ENCODE measurements at regions of chr1 and their contacts with region 1.

Region 1: DNA sequence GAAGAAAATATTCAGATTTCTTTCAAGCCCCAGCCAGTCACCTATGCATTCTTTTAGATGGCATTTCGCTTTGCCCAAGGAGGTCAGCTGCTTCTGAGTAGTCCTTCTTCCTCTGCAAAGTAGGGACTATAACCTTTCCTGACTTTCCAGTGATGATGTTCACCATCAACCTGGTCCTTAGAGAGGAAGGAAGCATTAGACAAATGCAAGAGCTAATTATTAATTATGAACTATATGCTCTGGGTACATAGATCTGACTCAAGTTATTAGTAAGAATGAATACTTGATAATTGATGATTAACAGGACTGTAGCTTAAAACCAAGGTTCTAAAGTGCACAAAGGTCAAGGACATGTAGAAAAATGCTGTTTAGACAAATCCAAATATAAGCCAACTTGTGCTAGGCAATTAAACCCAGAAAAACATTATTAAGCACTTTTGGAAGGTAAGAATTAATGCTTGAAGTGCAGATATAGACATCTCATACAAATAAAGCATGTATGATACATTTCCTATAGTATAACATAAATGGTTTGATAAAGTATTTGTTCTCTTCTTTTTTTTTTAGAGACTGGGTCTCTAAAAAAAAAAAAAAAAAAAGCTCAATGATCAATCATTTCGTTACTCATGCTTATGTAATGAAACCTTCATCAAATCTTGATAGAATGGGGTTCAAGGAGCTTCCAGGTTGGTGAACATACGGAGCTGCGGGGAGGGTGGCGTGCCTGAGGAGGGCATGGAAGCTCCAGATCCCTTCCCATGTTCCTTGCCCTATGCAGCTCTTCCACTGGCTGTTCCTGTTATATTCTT is 11.2 kb upstream of the AGMAT start:
- DNase-seq: no peak
- ATAC-seq: no peak
- H3K4me3 ChIP-seq: no peak overlapping the region
- H3K27ac ChIP-seq: no peak overlapping the region
- H3K4me1 ChIP-seq: no peaks in the 10 kb centered on the region; the same call in 1 of the 2 replicates
- H3K27me3 ChIP-seq: no peaks in the 10 kb centered on the region
- CTCF ChIP-seq: no peak
- POLR2A ChIP-seq: no peak
- RAD21 ChIP-seq: no peak

Region 2: GRCh38 chr1:14713086-14713485 is 882.9 kb before region 1 on chr1:
- CTCF ChIA-PET with region 1: no interaction called
- POLR2A ChIA-PET with region 1: no interaction called
- dilution Hi-C with region 1: no loop called
- in situ Hi-C with region 1: no loop called
- intact Hi-C with region 1: no loop called
- DNase-seq: no peak
- ATAC-seq: no peak
- H3K4me3 ChIP-seq: no peak overlapping the region
- H3K27ac ChIP-seq: no peak overlapping the region
- H3K4me1 ChIP-seq: no peaks in the 10 kb centered on the region
- H3K27me3 ChIP-seq: peaks cover 2% of the 10 kb centered on the region; the same call in 1 of the 2 replicates
- CTCF ChIP-seq: no peak
- POLR2A ChIP-seq: no peak
- RAD21 ChIP-seq: no peak

Region 3: GRCh38 chr1:15406609-15407559 is 189.1 kb before region 1 on chr1:
- CTCF ChIA-PET with region 1: no interaction called
- POLR2A ChIA-PET with region 1: no interaction called
- dilution Hi-C with region 1: no loop called
- in situ Hi-C with region 1: no loop called
- intact Hi-C with region 1: no loop called
- DNase-seq: peak; percentile 86
- ATAC-seq: peak; percentile 16
- H3K4me3 ChIP-seq: no peak overlapping the region
- H3K27ac ChIP-seq: no peak overlapping the region
- H3K4me1 ChIP-seq: peaks cover 20% of the 10 kb centered on the region
- H3K27me3 ChIP-seq: no peaks in the 10 kb centered on the region
- CTCF ChIP-seq: no peak
- POLR2A ChIP-seq: no peak
- RAD21 ChIP-seq: 0 out of 2 replicates have a peak, but pooled peaks have one; percentile 4

Region 4: GRCh38 chr1:15741183-15741850 is 145.3 kb after region 1 on chr1:
- CTCF ChIA-PET with region 1: interaction called, 5 read pairs
- POLR2A ChIA-PET with region 1: no interaction called
- dilution Hi-C with region 1: no loop called
- in situ Hi-C with region 1: loop called (anchors 5 kb)
- intact Hi-C with region 1: loop called (anchors 1 kb)
- DNase-seq: peak; percentile 44
- ATAC-seq: peak; percentile 87
- H3K4me3 ChIP-seq: no peak overlapping the region
- H3K27ac ChIP-seq: no peak overlapping the region
- H3K4me1 ChIP-seq: no peaks in the 10 kb centered on the region
- H3K27me3 ChIP-seq: no peaks in the 10 kb centered on the region
- CTCF ChIP-seq: peak; percentile 78
- POLR2A ChIP-seq: no peak
- RAD21 ChIP-seq: peak; percentile 85

Measured in IMR-90 (cell line).